GM10248 (cell line): ENCODE measurements at regions of chr2 and their contacts with region 1.

Region 1: DNA sequence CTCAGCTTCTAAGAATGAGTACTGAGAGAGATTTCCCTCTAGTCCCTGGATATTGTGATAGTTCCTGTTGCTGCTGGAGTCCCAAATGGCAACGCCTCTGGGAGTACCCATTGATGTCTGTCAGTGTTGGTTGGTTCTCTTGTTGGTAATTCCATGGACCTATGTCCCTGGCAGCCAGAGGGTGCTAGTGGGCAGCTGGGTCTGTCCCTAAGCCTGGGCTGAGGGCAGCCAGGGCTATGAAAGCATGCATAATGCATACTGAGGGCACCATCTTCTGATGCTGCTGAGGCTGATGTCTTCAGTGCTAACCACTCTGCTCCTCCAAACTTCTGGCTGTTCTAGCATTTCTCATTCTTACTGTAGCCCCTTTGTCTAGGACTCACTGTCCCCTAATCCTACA is 35.9 kb downstream of the NABP1 start:
- DNase-seq: no peak
- CTCF ChIP-seq: peak; percentile 31

Region 2: DNA sequence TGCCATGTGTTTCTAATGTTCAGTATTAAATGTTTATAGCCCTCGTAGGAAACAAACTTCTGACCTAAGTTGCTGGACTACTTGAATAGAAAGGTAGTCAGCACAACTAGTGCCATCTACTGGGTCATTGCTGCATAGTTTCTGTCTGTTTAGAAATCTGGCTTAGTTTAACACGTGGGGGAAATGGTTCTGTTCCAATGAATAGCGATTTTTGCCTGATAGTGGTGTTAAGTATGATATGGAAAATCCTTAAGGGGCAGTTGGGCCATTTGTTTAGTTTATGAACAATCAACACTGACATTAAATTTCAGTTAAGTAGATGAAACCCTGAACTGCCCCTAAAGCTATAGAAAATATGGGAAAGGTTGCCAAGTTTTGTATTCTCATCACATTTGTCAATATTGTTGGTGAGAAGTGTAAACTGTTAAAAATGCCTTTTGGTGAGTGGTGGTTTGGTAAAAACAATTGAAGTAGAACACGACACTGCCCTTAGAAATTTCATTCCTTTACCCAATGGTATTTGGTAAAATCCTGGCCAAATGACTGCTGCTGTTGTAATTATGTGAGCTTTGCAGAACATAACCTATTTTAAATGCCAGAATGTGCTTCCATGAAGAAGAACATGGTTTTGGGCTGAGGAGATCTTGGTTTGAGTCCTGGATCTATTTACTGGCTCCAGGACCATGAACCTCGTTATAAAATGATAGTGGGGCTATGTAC is 22.7 kb before region 1 on chr2:
- CTCF ChIA-PET with region 1: interaction called, 38 read pairs
- POLR2A ChIA-PET with region 1: no interaction called
- DNase-seq: peak; percentile 69
- CTCF ChIP-seq: peak; percentile 61

Region 3: GRCh38 chr2:191724015-191724414 is 10.2 kb after region 1 on chr2:
- CTCF ChIA-PET with region 1: interaction called, 10 read pairs
- POLR2A ChIA-PET with region 1: no interaction called
- DNase-seq: no peak
- CTCF ChIP-seq: no peak